Head of caudate nucleus (tissue), 42 donors: ENCODE measurements at regions of chr20 and their contacts with region 1.

Region 1: GRCh38 chr20:16517946-16518783 is 55.1 kb downstream of the KIF16B start:
- DNase-seq: peak in 35 of 42 donors; percentile 13 to 76 (median 51)

Region 2: GRCh38 chr20:16761305-16761829 is 243.2 kb after region 1 on chr20:
- intact Hi-C with region 1: loop called (anchors 5 kb)
- DNase-seq: peak in 39 of 42 donors; percentile 19 to 84 (median 66)